Caco-2 (cell line): ENCODE measurements at regions of chr4 and their contacts with region 1.

Region 1: DNA sequence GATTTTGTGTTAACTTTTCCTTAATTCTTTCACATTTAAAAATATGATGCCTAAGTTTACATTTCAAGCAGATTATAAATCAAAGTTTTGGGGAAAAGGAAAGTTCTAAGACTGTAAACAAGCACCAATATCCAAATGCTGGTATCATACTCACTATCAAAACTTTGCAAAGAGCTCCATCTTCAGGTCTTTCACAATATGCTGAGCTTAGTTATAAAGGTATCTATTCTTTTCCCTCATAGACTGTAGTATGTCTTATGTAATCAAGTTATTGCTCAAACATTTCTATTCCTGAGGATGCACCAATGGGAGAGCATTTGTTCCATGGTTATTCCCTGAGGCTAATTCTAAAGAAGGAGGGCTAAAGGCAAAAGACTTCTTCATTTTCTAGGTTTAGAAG is 207.9 kb upstream of the FAM241A start:
- DNase-seq: peak in 1 of 2 experiments; percentile 22
- H3K4me3 ChIP-seq: no peak overlapping the region
- H3K4me3 Mint-ChIP-seq: no peak overlapping the region
- H3K27ac Mint-ChIP-seq: no peak overlapping the region
- H3K4me1 ChIP-seq: no peaks in the 10 kb centered on the region
- H3K4me1 Mint-ChIP-seq: no peaks in the 10 kb centered on the region
- H3K27me3 ChIP-seq: no peaks in the 10 kb centered on the region
- H3K27me3 Mint-ChIP-seq: peaks cover 3% of the 10 kb centered on the region
- CTCF ChIP-seq: peak in 1 of 2 experiments; percentile 15

Region 2: GRCh38 chr4:111854494-111855087 is 82.8 kb before region 1 on chr4:
- CTCF ChIA-PET with region 1: interaction called, 14 read pairs
- POLR2A ChIA-PET with region 1: no interaction called
- intact Hi-C with region 1: loop called (anchors 1 kb)
- DNase-seq: peak in 1 of 2 experiments; percentile 36
- H3K4me3 ChIP-seq: no peak overlapping the region
- H3K4me3 Mint-ChIP-seq: no peak overlapping the region
- H3K27ac Mint-ChIP-seq: no peak overlapping the region
- H3K4me1 ChIP-seq: no peaks in the 10 kb centered on the region
- H3K4me1 Mint-ChIP-seq: no peaks in the 10 kb centered on the region
- H3K27me3 ChIP-seq: no peaks in the 10 kb centered on the region
- H3K27me3 Mint-ChIP-seq: no peaks in the 10 kb centered on the region
- CTCF ChIP-seq: peak; percentile 52 to 54

Region 3: GRCh38 chr4:112327965-112328733 is 390.8 kb after region 1 on chr4:
- CTCF ChIA-PET with region 1: no interaction called
- POLR2A ChIA-PET with region 1: no interaction called
- intact Hi-C with region 1: no loop called
- DNase-seq: peak in 1 of 2 experiments; percentile 17
- H3K4me3 ChIP-seq: no peak overlapping the region
- H3K4me3 Mint-ChIP-seq: no peak overlapping the region
- H3K27ac Mint-ChIP-seq: no peak overlapping the region
- H3K4me1 ChIP-seq: no peaks in the 10 kb centered on the region
- H3K4me1 Mint-ChIP-seq: no peaks in the 10 kb centered on the region
- H3K27me3 ChIP-seq: no peaks in the 10 kb centered on the region
- H3K27me3 Mint-ChIP-seq: no peaks in the 10 kb centered on the region
- CTCF ChIP-seq: peak; percentile 26 to 49